Activated naive CD8-positive, alpha-beta T cell treated with anti-CD3 and anti-CD28 coated beads, Interleukin-2, amount 10 ng/mL, durations not matched to agents 7 days and 5 days (primary cell): ENCODE measurements at regions of chr18 and their contacts with region 1.

Region 1: DNA sequence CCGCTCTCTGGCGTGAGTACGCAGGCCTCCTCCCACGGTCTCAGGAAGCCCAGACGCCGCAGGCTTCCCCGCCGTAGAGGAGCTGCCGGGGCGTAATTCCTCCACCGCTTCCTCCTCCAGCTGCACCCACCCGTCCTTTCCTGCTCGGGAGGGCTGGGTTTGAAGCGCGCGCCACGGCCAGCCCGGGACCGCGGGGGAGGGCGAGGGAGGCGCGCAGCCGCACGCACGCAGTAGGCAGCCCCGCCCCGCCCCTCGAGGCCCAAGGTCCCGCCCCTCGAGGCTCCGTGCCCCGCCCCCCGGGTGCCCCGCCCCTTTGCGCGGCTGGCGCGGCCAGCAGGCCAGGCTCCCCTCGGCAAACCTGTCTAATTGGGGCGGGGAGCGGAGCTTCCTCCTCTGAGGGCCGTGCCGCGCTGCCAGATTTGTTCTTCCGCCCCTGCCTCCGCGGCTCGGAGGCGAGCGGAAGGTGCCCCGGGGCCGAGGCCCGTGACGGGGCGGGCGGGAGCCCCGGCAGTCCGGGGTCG is at the start of gene MALT1:
- DNase-seq: peak; percentile 99
- ATAC-seq: peak; percentile 94
- H3K4me3 Mint-ChIP-seq: peak within 1 kb of the TSS; percentile 98
- H3K27ac Mint-ChIP-seq: peak within 1 kb of the TSS; percentile 97
- H3K4me1 Mint-ChIP-seq: peaks cover 42% of the 10 kb centered on the region
- H3K27me3 Mint-ChIP-seq: no peaks in the 10 kb centered on the region
- total RNA-seq, gene MALT1: 68.6 to 71.6 TPM

Region 2: GRCh38 chr18:58615140-58616132 is 55.7 kb before region 1 on chr18:
- POLR2A ChIA-PET with region 1: interaction called, 29 read pairs
- DNase-seq: peak; percentile 43
- ATAC-seq: peak; percentile 99
- H3K4me3 Mint-ChIP-seq: peak overlapping the region; percentile 83
- H3K27ac Mint-ChIP-seq: peak overlapping the region; percentile 99
- H3K4me1 Mint-ChIP-seq: peaks cover 33% of the 10 kb centered on the region
- H3K27me3 Mint-ChIP-seq: no peaks in the 10 kb centered on the region

Region 3: GRCh38 chr18:58682429-58683069 is 11.4 kb after region 1 on chr18:
- POLR2A ChIA-PET with region 1: interaction called, 29 read pairs
- DNase-seq: no peak
- ATAC-seq: no peak
- H3K4me3 Mint-ChIP-seq: no peak overlapping the region
- H3K27ac Mint-ChIP-seq: no peak overlapping the region
- H3K4me1 Mint-ChIP-seq: peaks cover 34% of the 10 kb centered on the region
- H3K27me3 Mint-ChIP-seq: no peaks in the 10 kb centered on the region

Region 4: GRCh38 chr18:58687871-58688308 is 16.7 kb after region 1 on chr18:
- POLR2A ChIA-PET with region 1: interaction called, 36 read pairs
- DNase-seq: peak; percentile 50
- ATAC-seq: peak; percentile 96
- H3K4me3 Mint-ChIP-seq: peak overlapping the region; percentile 82
- H3K27ac Mint-ChIP-seq: peak overlapping the region; percentile 97
- H3K4me1 Mint-ChIP-seq: peaks cover 57% of the 10 kb centered on the region
- H3K27me3 Mint-ChIP-seq: no peaks in the 10 kb centered on the region

Region 5: DNA sequence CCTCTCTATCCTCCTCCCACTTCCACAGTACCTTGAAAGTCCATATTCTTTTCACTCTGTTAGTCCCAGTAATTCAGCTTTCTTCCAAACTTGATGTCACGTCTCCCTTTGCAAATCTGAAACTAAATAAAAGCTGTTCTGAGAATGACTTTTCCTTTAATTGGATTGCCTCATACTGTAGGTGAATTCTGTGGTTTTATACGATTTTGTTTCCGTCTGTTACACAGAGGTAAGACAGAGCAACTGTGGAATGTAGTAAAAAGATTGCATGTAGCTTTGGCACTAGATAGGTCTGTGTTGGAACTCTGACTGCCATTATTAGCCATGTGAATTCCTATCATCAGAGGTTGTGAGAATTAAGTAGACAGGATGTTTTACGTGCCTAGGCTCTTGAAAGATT is 26.0 kb after region 1 on chr18:
- POLR2A ChIA-PET with region 1: interaction called, 36 read pairs
- DNase-seq: no peak
- ATAC-seq: peak; percentile 48
- H3K4me3 Mint-ChIP-seq: peak overlapping the region; percentile 90
- H3K27ac Mint-ChIP-seq: peak overlapping the region; percentile 97
- H3K4me1 Mint-ChIP-seq: peaks cover 53% of the 10 kb centered on the region
- H3K27me3 Mint-ChIP-seq: no peaks in the 10 kb centered on the region

Region 6: DNA sequence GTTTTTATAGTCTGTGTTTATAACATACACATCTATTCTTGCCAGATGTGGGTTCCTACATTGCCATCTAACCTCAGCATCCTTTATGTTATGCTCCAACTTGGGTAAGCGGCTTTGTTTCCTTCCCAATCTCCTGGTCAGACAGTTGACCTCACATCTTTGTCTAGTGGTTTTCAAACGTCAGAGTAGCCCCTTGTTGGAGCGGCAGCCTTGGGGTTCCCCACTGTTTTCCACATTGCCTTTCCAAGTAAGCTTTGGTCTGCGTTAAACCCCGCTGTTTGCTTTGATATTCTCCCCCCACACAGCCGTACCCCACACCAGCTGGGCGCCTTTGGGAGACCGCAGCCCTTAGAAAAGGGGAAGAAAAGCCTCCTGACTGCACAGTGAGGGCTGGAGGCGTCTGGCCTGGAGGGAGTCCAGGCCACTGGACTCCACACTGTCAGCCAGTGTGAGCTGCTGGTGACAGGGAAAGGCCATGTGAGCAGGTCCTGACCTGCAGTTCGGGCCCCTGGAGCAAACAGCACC is 83.4 kb after region 1 on chr18:
- POLR2A ChIA-PET with region 1: interaction called, 21 read pairs
- DNase-seq: peak; percentile 54
- ATAC-seq: peak; percentile 62
- H3K4me3 Mint-ChIP-seq: peak overlapping the region; percentile 17
- H3K27ac Mint-ChIP-seq: peak overlapping the region; percentile 27
- H3K4me1 Mint-ChIP-seq: peaks cover 30% of the 10 kb centered on the region
- H3K27me3 Mint-ChIP-seq: peaks cover 5% of the 10 kb centered on the region